ENCODE measurements at regions of chr20 and their contacts with region 1.

Region 1: GRCh38 chr20:60851826-60852704 is 400.0 kb upstream of the CDH4 start:
- DNase-seq: no peak
- H3K4me3 ChIP-seq: no peak overlapping the region
- H3K27ac ChIP-seq: no peak overlapping the region
- H3K4me1 ChIP-seq: no peaks in the 10 kb centered on the region
- H3K27me3 ChIP-seq: no peaks in the 10 kb centered on the region
- CTCF ChIP-seq: no peak
- EP300 ChIP-seq: no peak
- POLR2A ChIP-seq: no peak

Region 2: DNA sequence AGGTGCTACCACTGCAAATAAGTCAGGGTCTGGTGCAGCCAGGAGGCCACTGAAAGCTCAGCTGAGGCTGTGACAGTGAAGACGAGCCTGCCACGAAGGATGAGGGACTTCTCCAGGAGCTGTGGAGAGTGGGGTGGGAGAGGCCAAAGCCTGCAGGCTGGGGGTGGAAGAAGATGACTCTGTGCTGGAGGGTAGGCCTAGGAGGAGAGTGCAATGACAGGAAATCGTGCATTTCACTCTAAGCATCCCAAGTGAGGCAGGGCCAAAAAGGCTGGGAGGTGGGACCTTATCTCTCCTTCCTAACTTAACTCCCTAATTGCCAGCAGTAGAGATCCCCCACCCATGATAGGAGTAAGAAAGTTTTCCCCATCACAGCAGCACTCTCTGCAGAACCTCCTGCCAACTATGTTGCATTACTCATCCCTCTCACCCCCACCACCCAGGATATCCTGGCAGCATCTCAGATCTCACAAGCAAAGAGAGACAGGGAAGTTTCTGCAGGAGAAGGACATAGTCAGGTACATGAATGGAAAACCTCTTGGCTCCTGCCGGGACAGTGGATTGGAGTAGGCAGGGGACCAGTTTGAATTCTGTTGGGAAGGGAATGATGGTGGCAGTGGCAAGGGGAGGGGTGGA is 427.7 kb before region 1 on chr20:
- in situ Hi-C with region 1: no loop called
- intact Hi-C with region 1: no loop called
- DNase-seq: no peak
- H3K4me3 ChIP-seq: no peak overlapping the region
- H3K27ac ChIP-seq: no peak overlapping the region
- H3K4me1 ChIP-seq: no peaks in the 10 kb centered on the region
- H3K27me3 ChIP-seq: no peaks in the 10 kb centered on the region
- CTCF ChIP-seq: no peak
- EP300 ChIP-seq: no peak
- POLR2A ChIP-seq: no peak

Region 3: DNA sequence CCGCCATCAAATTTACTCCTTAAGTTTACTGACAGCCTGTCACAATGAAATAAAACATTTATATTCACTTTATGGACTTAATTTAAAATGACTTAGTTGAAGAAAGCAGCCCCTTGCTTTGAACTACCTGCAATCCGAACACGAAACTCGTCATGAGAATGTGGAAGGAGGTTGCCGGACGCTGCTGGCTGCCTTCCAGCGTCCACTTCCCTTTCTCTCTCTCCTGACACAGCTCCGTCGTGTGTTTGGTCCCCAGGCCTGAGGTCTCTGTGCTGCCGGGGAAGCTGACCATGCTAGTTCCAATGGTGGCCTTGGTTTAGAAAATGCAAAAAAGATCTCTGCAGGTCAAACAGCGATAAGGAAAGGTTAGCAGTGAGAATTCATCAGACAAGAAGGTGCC is 374.1 kb before region 1 on chr20:
- in situ Hi-C with region 1: no loop called
- intact Hi-C with region 1: no loop called
- DNase-seq: no peak
- H3K4me3 ChIP-seq: no peak overlapping the region
- H3K27ac ChIP-seq: no peak overlapping the region
- H3K4me1 ChIP-seq: no peaks in the 10 kb centered on the region
- H3K27me3 ChIP-seq: no peaks in the 10 kb centered on the region
- CTCF ChIP-seq: no peak
- EP300 ChIP-seq: no peak
- POLR2A ChIP-seq: no peak

Region 4: GRCh38 chr20:60950561-60950960 is 98.5 kb after region 1 on chr20:
- in situ Hi-C with region 1: loop called in 2 of 4 experiments (anchors 25 kb)
- intact Hi-C with region 1: no loop called
- DNase-seq: no peak
- H3K4me3 ChIP-seq: no peak overlapping the region
- H3K27ac ChIP-seq: no peak overlapping the region
- H3K4me1 ChIP-seq: no peaks in the 10 kb centered on the region
- H3K27me3 ChIP-seq: no peaks in the 10 kb centered on the region
- CTCF ChIP-seq: no peak
- EP300 ChIP-seq: no peak
- POLR2A ChIP-seq: no peak

Region 5: GRCh38 chr20:61407561-61407960 is 555.5 kb after region 1 on chr20:
- in situ Hi-C with region 1: no loop called
- intact Hi-C with region 1: no loop called
- DNase-seq: no peak
- H3K4me3 ChIP-seq: no peak overlapping the region
- H3K27ac ChIP-seq: no peak overlapping the region
- H3K4me1 ChIP-seq: no peaks in the 10 kb centered on the region
- H3K27me3 ChIP-seq: no peaks in the 10 kb centered on the region
- CTCF ChIP-seq: no peak
- EP300 ChIP-seq: no peak
- POLR2A ChIP-seq: no peak

Measured in transverse colon (tissue), 4 donors.